PC-3 (cell line): ENCODE measurements at regions of chr5 and their contacts with region 1.

Region 1: DNA sequence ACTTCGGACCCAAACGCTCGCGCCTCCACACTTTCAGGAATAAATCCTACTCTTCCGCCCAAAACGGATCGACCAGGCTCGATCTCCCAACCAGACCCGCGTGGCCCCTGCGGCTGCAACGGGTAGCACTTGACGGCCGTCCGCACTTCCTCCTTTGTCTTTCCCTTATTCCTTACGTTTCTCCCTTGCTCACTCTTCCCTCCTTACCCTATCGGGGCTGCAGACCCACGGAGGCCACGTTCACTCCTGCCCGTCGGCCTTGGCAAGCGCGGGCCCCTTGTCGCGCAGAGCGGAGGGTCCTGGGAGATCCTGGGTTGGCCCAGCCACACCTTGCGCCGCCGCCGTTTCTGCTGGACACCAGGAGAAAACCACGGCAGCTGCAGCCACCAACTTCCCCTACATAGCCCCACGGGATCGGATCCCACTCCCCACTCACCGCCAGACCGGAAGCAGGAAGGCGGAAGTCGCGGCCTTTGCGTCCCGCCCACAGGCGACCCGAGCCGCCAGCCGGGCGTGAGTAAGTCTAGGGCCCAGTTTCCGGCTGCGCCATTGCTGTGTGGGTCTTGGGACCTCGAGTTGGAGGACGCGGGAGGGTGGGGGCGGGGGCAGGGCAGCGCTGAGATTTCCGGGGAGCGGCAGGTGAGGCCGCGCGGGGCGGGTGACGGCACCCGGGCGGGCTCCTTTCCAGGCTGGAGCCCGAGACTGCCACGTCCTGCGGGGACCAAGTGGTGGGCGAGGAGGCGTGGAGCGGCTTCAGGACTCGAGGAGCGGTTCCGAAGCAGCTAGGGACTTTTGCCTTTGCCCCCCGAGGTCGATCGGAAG is at the start of gene SMIM15:
- DNase-seq: peak; percentile 83
- ATAC-seq: peak; percentile 92
- H3K4me3 ChIP-seq: peak within 1 kb of the TSS; percentile 98
- H3K27ac ChIP-seq: peak within 1 kb of the TSS; percentile 88
- H3K4me1 ChIP-seq: peaks cover 31% of the 10 kb centered on the region
- H3K27me3 ChIP-seq: no peaks in the 10 kb centered on the region
- CTCF ChIP-seq: no peak
- total RNA-seq, gene SMIM15: 61.7 and 76.3 TPM in 2 replicates

Region 2: DNA sequence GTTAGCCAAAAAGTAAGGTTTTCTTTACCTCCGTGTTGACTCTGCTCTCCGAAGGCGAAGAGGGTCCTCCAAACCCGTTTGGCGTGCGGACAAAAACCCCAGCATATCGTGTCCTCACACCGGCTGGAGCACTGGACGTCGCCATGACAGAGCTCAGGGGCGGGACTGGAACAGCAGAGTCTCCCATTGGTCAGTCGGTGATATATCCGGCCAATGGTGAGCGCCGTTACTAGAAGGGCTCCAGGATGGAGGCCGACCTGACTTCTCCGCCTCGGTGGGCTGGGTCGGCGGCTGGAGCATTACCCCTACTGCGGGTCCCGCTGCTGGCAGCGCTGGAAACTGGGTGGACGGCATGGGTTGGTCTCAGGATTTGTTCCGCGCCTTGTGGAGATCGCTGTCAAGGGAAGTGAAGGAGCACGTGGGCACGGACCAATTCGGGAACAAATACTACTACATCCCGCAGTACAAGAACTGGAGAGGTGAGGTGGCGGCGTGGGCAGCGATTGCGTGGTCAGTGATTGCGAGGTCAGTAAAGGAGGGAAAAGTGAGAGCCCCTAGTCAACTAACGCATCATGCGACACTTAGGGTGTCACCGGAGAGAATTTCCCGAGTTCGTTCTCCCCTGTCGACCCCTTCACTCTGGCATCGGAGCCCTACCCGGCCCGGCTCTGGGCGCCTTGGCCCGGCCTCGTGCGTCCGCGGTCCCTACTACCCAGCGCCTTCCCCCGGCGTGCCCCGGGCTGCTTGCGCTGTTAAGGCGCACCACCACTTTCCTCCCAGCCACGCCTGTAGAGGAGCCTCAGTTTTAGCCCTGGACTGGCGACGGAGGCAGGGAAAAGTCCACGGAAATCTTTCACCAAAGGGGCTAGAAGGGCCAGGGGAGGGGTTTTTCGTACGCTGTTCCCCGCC is 217.1 kb before region 1 on chr5 and contains the starts of genes ERCC8 and NDUFAF2:
- CTCF ChIA-PET with region 1: no interaction called
- POLR2A ChIA-PET with region 1: no interaction called
- intact Hi-C with region 1: loop called (anchors 5 kb)
- DNase-seq: peak; percentile 79
- ATAC-seq: peak; percentile 94
- H3K4me3 ChIP-seq: peak within 1 kb of the TSS; percentile 78
- H3K27ac ChIP-seq: peak within 1 kb of the TSS; percentile 45
- H3K4me1 ChIP-seq: peaks cover 12% of the 10 kb centered on the region; the same call in 1 of the 2 replicates
- H3K27me3 ChIP-seq: no peaks in the 10 kb centered on the region
- CTCF ChIP-seq: no peak
- total RNA-seq, gene ERCC8: 2.1 and 2.6 TPM in 2 replicates
- total RNA-seq, gene NDUFAF2: 39.3 and 41.9 TPM in 2 replicates

Region 3: GRCh38 chr5:61055434-61056006 is 106.7 kb before region 1 on chr5:
- CTCF ChIA-PET with region 1: interaction called, 3 read pairs
- POLR2A ChIA-PET with region 1: no interaction called
- intact Hi-C with region 1: loop called (anchors 2 kb)
- DNase-seq: peak; percentile 53
- ATAC-seq: peak; percentile 29; the same call in 1 of the 2 replicates
- H3K4me3 ChIP-seq: no peak overlapping the region
- H3K27ac ChIP-seq: no peak overlapping the region
- H3K4me1 ChIP-seq: peaks cover 36% of the 10 kb centered on the region
- H3K27me3 ChIP-seq: no peaks in the 10 kb centered on the region
- CTCF ChIP-seq: peak; percentile 73